ENCODE measurements at regions of chr7 and their contacts with region 1.

Region 1: DNA sequence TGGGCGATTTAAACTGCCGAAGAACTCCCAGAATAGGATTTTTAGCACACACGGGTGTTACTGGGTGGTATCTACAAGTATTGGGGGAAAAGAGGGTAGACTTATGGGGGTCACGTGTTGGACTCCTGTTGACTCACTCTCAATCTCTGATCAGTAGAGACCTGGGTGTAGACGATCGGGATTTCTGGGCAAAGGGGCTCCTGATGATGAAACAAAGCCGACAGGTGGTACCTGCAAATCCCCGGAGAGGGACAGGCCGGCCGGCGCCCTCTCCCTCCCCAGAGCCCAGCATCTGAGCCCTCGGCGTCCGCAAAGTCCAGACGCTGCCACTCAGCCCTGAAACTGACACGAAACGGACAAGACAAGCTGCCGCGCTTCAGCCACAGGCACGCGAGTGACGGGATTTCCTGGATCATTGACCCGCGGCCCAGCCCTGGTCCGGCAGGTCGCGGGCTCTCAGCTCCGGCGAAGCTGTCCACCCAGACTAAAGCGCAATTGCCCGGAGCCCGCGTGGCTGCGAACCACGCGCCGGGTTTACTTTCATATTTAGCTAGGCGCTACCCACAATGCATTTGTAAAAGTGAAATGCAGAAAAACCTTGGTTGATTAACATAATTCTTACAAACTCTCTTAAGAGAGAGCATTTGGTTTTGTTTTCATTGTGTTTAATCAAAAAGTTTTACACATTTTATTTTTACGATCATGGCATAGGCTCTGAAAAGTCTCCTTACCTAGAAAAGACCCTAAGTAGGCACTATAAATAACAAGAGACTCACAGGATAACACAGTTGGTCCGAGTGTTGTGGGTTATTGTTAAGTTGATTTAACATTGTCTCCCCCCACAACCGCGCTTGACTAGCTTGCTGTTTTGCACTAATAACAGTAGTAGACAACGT is 56.9 kb upstream of the EZH2 start:
- DNase-seq: peak; percentile 77
- ATAC-seq: peak; percentile 74
- H3K4me3 Mint-ChIP-seq: peak overlapping the region; percentile 92
- H3K27ac Mint-ChIP-seq: peak overlapping the region; percentile 98
- H3K4me1 Mint-ChIP-seq: peaks cover 10% of the 10 kb centered on the region
- H3K27me3 Mint-ChIP-seq: no peaks in the 10 kb centered on the region

Region 2: DNA sequence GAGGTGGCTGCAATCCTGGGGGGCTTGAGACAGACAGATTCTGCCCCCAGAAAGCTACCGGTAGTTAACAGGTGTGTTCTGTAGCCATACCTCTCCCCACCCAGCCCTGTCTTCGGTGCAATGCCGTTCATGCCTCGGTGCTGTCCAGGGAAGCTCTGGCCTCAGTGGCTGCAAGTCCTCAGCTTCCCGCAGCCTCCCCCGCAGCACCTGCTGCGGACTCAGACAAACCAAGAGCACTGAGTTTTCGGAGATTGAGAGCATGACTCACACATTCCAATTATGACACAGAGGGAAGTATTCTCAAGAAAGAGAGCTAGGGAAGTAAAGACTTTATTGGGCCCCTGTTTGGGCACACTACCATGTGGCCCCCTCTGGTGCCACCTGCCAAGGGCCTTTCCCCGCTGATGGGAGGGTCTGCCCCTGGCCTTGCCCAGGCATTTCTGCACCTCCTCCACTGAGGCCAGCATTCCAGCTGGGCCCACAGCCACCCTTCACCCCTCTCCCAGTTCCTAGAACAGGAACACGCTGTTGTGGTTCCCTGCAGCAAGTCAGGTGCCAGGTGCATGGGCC is 26.7 kb before region 1 on chr7:
- POLR2A ChIA-PET with region 1: interaction called, 32 read pairs
- DNase-seq: peak; percentile 47
- ATAC-seq: peak; percentile 39
- H3K4me3 Mint-ChIP-seq: peak overlapping the region; percentile 70
- H3K27ac Mint-ChIP-seq: peak overlapping the region; percentile 95
- H3K4me1 Mint-ChIP-seq: peaks cover 54% of the 10 kb centered on the region
- H3K27me3 Mint-ChIP-seq: no peaks in the 10 kb centered on the region

Region 3: GRCh38 chr7:148954766-148955165 is 13.8 kb after region 1 on chr7:
- POLR2A ChIA-PET with region 1: no interaction called
- DNase-seq: no peak
- ATAC-seq: no peak
- H3K4me3 Mint-ChIP-seq: no peak overlapping the region
- H3K27ac Mint-ChIP-seq: no peak overlapping the region
- H3K4me1 Mint-ChIP-seq: peaks cover 1% of the 10 kb centered on the region
- H3K27me3 Mint-ChIP-seq: peaks cover 2% of the 10 kb centered on the region